MCF 10A (cell line): ENCODE measurements at regions of chr3 and their contacts with region 1.

Region 1: GRCh38 chr3:84547971-84548970 is 410.5 kb upstream of the CADM2 start:
- DNase-seq: peak; percentile 62
- H3K4me3 Mint-ChIP-seq: no peak overlapping the region
- H3K27ac Mint-ChIP-seq: no peak overlapping the region
- H3K4me1 Mint-ChIP-seq: peaks cover 4% of the 10 kb centered on the region
- H3K27me3 Mint-ChIP-seq: no peaks in the 10 kb centered on the region
- CTCF ChIP-seq: peak; percentile 57

Region 2: GRCh38 chr3:83868909-83869555 is 679.2 kb before region 1 on chr3:
- CTCF ChIA-PET with region 1: no interaction called
- POLR2A ChIA-PET with region 1: no interaction called
- intact Hi-C with region 1: no loop called
- DNase-seq: no peak
- H3K4me3 Mint-ChIP-seq: no peak overlapping the region
- H3K27ac Mint-ChIP-seq: no peak overlapping the region
- H3K4me1 Mint-ChIP-seq: no peaks in the 10 kb centered on the region
- H3K27me3 Mint-ChIP-seq: no peaks in the 10 kb centered on the region
- CTCF ChIP-seq: no peak

Region 3: GRCh38 chr3:84536916-84537315 is 11.4 kb before region 1 on chr3:
- CTCF ChIA-PET with region 1: interaction called, 24 read pairs
- POLR2A ChIA-PET with region 1: no interaction called
- intact Hi-C with region 1: no loop called
- DNase-seq: no peak
- H3K4me3 Mint-ChIP-seq: no peak overlapping the region
- H3K27ac Mint-ChIP-seq: no peak overlapping the region
- H3K4me1 Mint-ChIP-seq: no peaks in the 10 kb centered on the region
- H3K27me3 Mint-ChIP-seq: no peaks in the 10 kb centered on the region
- CTCF ChIP-seq: no peak

Region 4: DNA sequence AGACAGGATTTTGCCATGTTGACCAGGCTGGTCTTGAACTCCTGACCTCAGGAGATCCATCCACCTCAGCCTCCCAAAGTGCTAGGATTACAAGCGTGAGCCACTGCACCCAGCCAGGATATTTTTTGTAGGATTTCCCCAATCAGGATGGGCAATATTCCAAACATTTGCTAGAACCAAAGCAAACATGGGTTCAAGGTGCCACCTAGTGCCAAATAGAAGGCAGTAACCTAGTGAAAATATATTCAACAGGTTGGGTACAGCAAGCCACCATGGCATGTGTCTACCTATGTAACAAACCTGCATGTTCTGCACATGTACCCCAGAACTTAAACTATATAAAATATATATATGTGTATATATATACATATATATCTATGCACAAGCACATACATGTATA is 224.6 kb after region 1 on chr3:
- CTCF ChIA-PET with region 1: interaction called, 9 read pairs
- POLR2A ChIA-PET with region 1: no interaction called
- intact Hi-C with region 1: loop called (anchors 1 kb)
- DNase-seq: peak; percentile 38
- H3K4me3 Mint-ChIP-seq: no peak overlapping the region
- H3K27ac Mint-ChIP-seq: no peak overlapping the region
- H3K4me1 Mint-ChIP-seq: no peaks in the 10 kb centered on the region
- H3K27me3 Mint-ChIP-seq: no peaks in the 10 kb centered on the region
- CTCF ChIP-seq: no peak

Region 5: GRCh38 chr3:84958495-84959469 is 410.5 kb after region 1 on chr3 and contains the start of gene CADM2:
- CTCF ChIA-PET with region 1: interaction called, 8 read pairs
- POLR2A ChIA-PET with region 1: no interaction called
- intact Hi-C with region 1: loop called (anchors 10 kb)
- DNase-seq: peak; percentile 90
- H3K4me3 Mint-ChIP-seq: peak within 1 kb of the TSS; percentile 88
- H3K27ac Mint-ChIP-seq: no peak within 1 kb of the TSS
- H3K4me1 Mint-ChIP-seq: peaks cover 8% of the 10 kb centered on the region
- H3K27me3 Mint-ChIP-seq: peaks cover 87% of the 10 kb centered on the region
- CTCF ChIP-seq: peak; percentile 23
- total RNA-seq, gene CADM2: not detected in 2 replicates

Region 6: DNA sequence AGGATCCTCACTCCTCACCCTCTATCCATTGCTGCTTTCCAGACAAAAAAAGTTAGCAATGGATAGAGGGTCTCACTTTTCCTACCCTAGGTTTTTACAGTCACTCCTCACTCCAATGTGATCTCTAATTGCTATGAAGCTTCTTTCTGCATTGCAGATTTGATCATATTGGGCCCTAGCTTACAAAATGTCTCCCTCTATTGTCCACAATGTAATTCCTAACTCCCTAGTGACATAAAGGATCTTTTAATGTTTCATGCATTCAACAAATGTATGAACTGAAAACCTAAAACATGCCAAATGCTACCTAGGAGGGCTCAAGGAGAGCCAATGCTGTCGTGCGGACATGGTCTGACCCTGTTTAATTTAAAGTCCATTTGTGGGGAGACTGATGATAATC is 645.3 kb after region 1 on chr3:
- CTCF ChIA-PET with region 1: interaction called, 3 read pairs
- POLR2A ChIA-PET with region 1: no interaction called
- intact Hi-C with region 1: loop called (anchors 10 kb)
- DNase-seq: peak; percentile 1
- H3K4me3 Mint-ChIP-seq: no peak overlapping the region
- H3K27ac Mint-ChIP-seq: no peak overlapping the region
- H3K4me1 Mint-ChIP-seq: no peaks in the 10 kb centered on the region
- H3K27me3 Mint-ChIP-seq: peaks cover 62% of the 10 kb centered on the region
- CTCF ChIP-seq: peak; percentile 19

Region 7: GRCh38 chr3:85360742-85361387 is 812.6 kb after region 1 on chr3:
- CTCF ChIA-PET with region 1: interaction called, 5 read pairs
- POLR2A ChIA-PET with region 1: no interaction called
- intact Hi-C with region 1: loop called (anchors 1 kb)
- DNase-seq: peak; percentile 57
- H3K4me3 Mint-ChIP-seq: no peak overlapping the region
- H3K27ac Mint-ChIP-seq: no peak overlapping the region
- H3K4me1 Mint-ChIP-seq: no peaks in the 10 kb centered on the region
- H3K27me3 Mint-ChIP-seq: peaks cover 34% of the 10 kb centered on the region
- CTCF ChIP-seq: peak; percentile 49

Region 8: DNA sequence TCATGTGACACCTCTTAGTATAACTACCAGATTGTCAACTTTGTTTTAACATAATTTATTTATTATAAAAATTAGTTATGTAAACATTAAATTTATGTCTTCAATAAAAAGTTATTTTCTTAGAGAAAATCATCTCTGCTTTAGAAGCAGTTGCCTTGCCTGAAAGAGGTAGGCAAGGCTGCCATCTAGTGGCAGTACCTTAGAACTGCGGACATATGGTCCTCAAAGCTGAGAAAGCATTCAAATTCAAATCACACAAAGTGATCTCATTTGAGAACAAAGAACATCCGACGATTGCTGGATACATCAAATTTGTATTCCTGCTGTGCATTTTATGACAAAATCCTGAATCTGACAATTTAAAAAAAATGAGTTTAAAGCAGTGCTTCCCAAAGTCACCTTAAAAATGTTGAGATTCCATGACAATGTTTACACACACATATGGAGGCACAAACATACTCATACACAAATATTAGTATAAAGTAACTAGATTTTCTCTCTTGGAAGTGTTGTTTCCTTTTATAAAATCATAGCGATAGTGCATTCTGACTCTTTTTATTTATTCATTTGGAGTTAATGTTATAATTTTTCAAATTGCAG is 1027.9 kb after region 1 on chr3:
- CTCF ChIA-PET with region 1: interaction called, 7 read pairs
- POLR2A ChIA-PET with region 1: no interaction called
- intact Hi-C with region 1: loop called (anchors 5 kb)
- DNase-seq: peak; percentile 70
- H3K4me3 Mint-ChIP-seq: no peak overlapping the region
- H3K27ac Mint-ChIP-seq: no peak overlapping the region
- H3K4me1 Mint-ChIP-seq: no peaks in the 10 kb centered on the region
- H3K27me3 Mint-ChIP-seq: peaks cover 20% of the 10 kb centered on the region
- CTCF ChIP-seq: peak; percentile 77